ENCODE measurements at regions of chr3 and their contacts with region 1.

Region 1: DNA sequence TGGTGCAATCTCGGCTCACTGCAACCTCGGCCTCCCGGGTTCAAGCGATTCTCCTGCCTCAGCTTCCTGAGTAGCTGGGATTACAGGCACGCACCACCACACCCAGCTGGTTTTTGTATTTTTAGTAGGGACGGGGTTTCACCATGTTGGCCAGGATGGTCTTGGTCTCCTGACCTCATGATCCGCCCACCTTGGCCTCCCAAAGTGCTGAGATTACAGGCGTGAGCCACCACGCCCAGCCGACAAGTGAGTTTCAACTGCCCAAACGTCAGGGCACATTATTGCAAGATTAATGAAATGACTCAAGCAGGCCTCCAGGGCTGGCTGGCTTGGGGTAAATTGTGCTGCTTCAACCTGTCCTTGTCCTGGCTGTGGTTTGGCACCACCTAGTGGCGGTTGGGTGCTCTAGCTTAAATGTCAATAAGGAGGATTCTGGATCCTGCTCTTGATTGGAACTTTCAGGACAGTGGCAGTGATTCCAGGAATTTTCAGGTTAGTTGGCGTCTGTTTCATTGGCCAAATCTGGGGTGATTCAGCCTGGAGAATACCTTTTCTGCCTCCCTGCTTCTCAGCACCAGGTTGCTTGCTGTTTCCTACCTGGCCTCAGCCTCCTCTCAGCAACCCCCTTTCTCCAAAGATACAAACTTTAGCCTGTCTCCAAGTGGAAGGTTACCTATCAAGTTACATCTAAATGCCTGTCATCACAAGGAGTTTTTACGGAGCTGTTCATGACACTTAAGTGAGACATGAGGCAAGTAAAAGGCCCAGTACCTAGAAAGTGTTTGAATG is 32.4 kb upstream of the SACM1L start:
- DNase-seq: peak; percentile 94
- ATAC-seq: peak; percentile 84 to 88

Region 2: GRCh38 chr3:45224824-45225464 is 431.8 kb before region 1 on chr3:
- intact Hi-C with region 1: loop called in 1 of 2 experiments (anchors 10 kb)
- DNase-seq: peak; percentile 80
- ATAC-seq: peak; percentile 70 to 74

Region 3: DNA sequence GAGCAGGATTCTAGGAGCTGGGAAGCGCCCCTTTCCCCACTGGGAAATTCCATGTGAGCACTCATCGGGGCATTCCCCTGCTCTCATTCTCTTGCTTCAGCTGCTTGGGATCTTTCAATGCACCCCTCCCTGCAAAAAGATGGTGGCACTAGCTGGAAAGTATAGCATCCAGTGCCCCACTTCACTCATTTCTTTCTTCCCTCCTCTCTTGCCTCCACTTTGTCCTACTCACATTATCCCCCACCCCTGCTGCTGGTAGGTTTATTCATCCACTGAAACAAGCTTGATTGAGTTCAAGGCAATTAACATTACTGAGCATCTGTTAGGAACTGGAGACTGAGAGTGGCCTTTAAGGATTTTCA is 147.0 kb before region 1 on chr3:
- intact Hi-C with region 1: loop called (anchors 2 kb)
- DNase-seq: no peak
- ATAC-seq: no peak

Region 4: DNA sequence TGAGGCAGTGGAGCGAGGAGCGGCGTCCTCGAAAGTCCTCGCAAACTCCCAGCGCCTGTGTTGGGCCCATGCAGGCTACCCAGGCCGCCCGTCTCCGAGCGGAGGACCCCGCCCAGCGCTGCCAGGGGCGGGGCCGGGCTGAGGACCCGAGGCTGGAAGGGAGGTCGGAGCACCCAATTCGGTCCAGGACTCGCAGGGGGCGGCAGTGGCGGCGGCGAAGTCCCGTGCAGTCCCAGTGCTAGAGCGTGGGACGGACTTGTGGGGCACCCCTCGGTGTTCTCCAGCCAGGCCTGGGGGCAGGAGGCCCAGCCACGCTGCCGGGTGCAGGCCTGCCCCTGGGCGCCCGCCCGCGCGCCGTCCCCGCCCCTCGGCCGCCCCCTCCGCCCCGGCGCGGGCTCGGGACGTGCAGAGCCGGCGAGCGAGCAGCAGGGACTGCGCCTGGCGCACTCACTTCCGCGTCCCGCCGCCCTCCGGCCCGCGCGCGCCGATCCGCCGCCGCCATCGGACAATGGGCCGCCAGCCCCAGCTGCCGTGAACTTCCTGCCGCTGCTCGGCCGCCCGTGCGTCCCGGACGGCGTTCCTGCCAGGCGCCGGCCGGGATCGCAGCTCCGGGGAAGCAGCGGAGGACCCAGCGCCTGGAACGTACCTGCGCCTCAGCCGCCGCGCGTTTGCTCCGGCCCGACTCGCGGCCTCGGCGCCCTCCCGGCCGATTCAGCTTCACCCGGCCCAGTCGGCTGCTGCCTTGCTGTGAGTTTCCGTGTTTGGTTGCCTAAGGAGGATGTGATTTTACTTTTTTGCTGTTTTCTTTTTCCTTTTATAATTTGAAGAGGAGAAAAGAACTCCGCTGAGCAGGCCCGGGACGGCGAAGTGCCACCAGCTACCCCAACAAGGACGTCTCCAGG is 62.8 kb before region 1 on chr3:
- intact Hi-C with region 1: loop called (anchors 2 to 10 kb)
- DNase-seq: peak; percentile 77
- ATAC-seq: peak; percentile 90

Region 5: DNA sequence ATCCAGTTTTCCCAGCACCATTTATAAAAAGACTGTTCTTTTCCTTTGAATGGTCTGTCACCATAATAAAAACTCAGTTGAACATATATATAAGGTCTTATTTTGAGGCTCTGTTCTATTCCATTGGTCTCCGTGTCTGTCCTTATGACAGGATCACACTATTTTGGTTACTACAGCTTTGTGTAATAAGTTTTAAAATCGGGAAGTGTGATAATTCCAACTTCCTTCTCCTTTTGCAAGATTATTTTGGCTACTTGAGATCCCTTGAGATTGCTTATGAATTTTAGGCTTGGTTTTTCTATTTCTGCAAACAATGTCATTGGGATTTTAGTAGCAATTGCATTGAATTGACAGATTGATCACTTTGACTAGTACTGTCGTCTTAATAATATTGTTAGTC is 68.1 kb after region 1 on chr3:
- intact Hi-C with region 1: no loop called
- DNase-seq: no peak
- ATAC-seq: no peak

Region 6: GRCh38 chr3:45958321-45958791 is 301.6 kb after region 1 on chr3:
- intact Hi-C with region 1: no loop called
- DNase-seq: no peak
- ATAC-seq: peak; percentile 58 to 86

Measured in left cardiac atrium (tissue), 4 donors.